Heart left ventricle (tissue), 16 donors: ENCODE measurements at regions of chr1 and their contacts with region 1.

Region 1: DNA sequence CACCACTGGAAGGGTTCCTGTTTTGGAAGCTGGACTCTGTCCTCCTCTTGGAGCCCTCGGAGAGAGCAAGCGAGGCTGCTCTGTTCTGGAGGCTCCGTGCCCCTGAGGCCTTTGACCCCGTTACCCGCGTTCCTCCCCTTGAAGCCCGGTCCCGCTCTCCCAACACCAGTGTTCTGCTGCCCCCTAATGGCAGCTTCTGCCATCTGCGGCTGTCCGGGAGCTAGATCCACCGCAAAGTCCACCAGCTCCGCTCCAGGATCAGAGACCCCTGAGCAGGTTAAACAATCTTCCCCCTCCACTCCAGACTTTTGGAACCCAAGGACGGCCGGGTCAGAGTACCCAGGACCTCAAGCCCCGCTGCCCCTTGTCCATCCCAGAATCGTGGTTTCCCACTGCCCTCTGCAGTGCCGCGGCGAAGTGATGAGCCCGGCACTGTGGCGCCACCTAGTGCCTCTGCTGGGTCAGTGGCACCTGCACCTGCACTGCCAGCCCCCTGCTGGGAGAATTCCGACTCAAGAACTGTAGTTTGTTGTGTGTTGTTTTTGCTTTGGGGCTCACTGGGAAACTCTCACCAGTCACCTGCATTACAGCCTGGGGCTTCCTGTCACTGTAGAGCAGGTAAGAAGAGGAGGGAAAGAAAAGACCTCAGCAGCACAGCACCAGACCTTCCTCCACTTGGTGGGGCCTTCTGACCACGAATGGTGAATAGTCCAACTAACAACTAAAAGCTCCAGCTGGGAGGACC is 63.5 kb upstream of the NFASC start:
- DNase-seq: peak; percentile 80 to 86 (median 82)
- ATAC-seq: peak; percentile 85 to 96 (median 94)
- H3K4me3 ChIP-seq: peak overlapping the region in 11 of 12 donors; percentile 37 to 63 (median 51)
- H3K27ac ChIP-seq: no peak overlapping the region
- H3K4me1 ChIP-seq: peaks cover 0 to 11% (median 0%) of the 10 kb centered on the region in 12 donors
- H3K27me3 ChIP-seq: no peaks in the 10 kb centered on the region
- CTCF ChIP-seq: peak; percentile 92 to 98 (median 96)
- POLR2A ChIP-seq: no peak

Region 2: GRCh38 chr1:204782118-204782700 is 24.9 kb before region 1 on chr1:
- intact Hi-C with region 1: no loop called
- DNase-seq: no peak
- ATAC-seq: no peak
- H3K4me3 ChIP-seq: no peak overlapping the region
- H3K27ac ChIP-seq: no peak overlapping the region
- H3K4me1 ChIP-seq: no peaks in the 10 kb centered on the region
- H3K27me3 ChIP-seq: peaks cover 0 to 42% (median 0%) of the 10 kb centered on the region in 9 donors
- CTCF ChIP-seq: no peak
- POLR2A ChIP-seq: no peak

Region 3: DNA sequence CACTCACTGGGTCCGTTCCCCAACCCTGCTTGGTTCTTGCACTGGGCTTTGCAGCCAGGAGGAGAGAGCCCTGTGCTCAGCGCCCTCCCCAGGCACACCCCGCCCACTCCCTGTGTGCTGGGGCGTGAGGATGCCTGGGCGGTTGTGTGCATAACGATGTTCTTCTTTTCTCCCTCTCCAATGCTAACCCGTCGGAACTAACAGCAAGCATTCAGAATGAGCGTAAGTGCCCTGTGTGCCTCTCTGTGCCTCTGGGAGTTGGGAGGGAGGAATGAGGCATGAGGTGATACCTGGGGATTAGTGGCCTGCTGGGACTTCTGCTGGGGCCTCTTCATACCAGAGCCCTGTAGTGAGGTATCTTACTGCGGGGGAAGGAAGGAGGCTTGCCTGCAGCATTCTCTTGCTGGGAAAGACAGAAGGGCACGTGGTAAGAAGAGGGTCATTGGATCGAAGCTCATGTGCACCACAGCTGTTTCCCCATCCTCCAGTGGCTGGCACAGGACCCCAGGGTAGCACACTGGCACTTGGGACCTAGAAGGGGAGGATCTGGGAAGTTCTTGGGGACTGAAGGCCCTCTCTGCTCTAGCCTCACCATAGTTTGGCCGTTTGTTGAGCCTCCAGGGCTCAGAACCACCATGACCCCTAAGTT is 143.4 kb after region 1 on chr1:
- intact Hi-C with region 1: no loop called
- DNase-seq: no peak
- ATAC-seq: no peak
- H3K4me3 ChIP-seq: no peak overlapping the region
- H3K27ac ChIP-seq: no peak overlapping the region
- H3K4me1 ChIP-seq: peaks cover 0 to 7% (median 0%) of the 10 kb centered on the region in 12 donors
- H3K27me3 ChIP-seq: no peaks in the 10 kb centered on the region
- CTCF ChIP-seq: no peak
- POLR2A ChIP-seq: no peak

Region 4: DNA sequence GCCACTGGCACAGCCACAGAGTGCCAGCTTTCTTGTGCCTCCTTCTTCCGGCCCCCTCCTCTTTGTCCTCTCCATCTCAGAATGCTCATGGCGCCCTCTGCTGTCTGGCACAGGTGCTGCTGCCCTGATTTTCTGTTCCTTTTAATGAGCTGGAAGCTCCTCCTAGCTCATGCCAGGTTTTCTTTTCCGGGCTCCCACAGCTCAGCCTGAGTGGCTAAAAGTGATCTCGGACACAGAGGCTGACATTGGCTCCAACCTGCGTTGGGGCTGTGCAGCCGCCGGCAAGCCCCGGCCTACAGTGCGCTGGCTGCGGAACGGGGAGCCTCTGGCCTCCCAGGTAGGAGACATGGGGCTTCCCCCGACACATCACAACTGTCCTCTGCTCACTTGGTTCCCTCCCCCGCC is 254.6 kb after region 1 on chr1:
- intact Hi-C with region 1: loop called in 5 of 10 experiments (anchors 5 to 10 kb)
- DNase-seq: peak in 4 of 5 donors; percentile 50 to 69 (median 64)
- ATAC-seq: peak in 3 of 4 donors; percentile 45 to 79 (median 64)
- H3K4me3 ChIP-seq: no peak overlapping the region
- H3K27ac ChIP-seq: no peak overlapping the region
- H3K4me1 ChIP-seq: peaks cover 0 to 8% (median 0%) of the 10 kb centered on the region in 12 donors
- H3K27me3 ChIP-seq: no peaks in the 10 kb centered on the region
- CTCF ChIP-seq: peak; percentile 71 to 90 (median 84)
- POLR2A ChIP-seq: no peak